ENCODE measurements at regions of chr18 and their contacts with region 1.

Region 1: GRCh38 chr18:63518178-63519012 is 23.8 kb upstream of the SERPINB12 start:
- DNase-seq: peak in 8 of 9 donors; percentile 13 to 62 (median 52)
- ATAC-seq: peak; percentile 76
- H3K4me3 ChIP-seq: no peak overlapping the region
- H3K4me3 Mint-ChIP-seq: no peak overlapping the region
- H3K27ac ChIP-seq: no peak overlapping the region
- H3K27ac Mint-ChIP-seq: no peak overlapping the region
- H3K4me1 ChIP-seq: no peaks in the 10 kb centered on the region
- H3K4me1 Mint-ChIP-seq: peaks cover 0 to 7% (median 0%) of the 10 kb centered on the region in 7 donors
- H3K27me3 ChIP-seq: no peaks in the 10 kb centered on the region
- H3K27me3 Mint-ChIP-seq: peaks cover 14 to 37% (median 21%) of the 10 kb centered on the region in 5 donors

Region 2: DNA sequence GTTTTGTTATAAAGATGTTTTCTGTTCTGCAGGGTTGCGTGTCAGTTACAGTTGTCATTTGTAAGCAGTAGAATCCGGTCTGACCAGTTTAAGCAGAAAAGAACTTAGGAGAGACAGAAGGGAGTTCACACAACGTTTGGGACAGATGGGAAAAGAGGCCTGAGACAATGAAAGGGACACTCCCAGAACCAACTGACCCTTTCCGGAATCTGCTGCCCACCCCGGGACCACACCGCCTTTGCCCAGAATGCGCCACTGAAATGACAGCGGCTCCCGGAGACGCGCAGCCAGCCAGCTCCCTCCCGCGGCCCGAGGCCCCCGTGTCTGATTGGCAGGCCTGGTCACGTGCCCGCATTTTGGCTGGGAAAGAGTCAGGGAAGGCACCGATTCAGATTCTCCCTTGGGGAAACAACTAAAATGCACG is 443.4 kb before region 1 on chr18:
- CTCF ChIA-PET with region 1: no interaction called
- POLR2A ChIA-PET with region 1: no interaction called
- intact Hi-C with region 1: no loop called
- DNase-seq: peak; percentile 19 to 68 (median 42)
- ATAC-seq: peak; percentile 80
- H3K4me3 ChIP-seq: peak overlapping the region; percentile 66
- H3K4me3 Mint-ChIP-seq: peak overlapping the region; percentile 70 to 95 (median 86)
- H3K27ac ChIP-seq: no peak overlapping the region
- H3K27ac Mint-ChIP-seq: peak overlapping the region in 8 of 9 donors; percentile 0 to 85 (median 65)
- H3K4me1 ChIP-seq: no peaks in the 10 kb centered on the region
- H3K4me1 Mint-ChIP-seq: peaks cover 0 to 13% (median 12%) of the 10 kb centered on the region in 7 donors
- H3K27me3 ChIP-seq: no peaks in the 10 kb centered on the region
- H3K27me3 Mint-ChIP-seq: peaks cover 0 to 23% (median 10%) of the 10 kb centered on the region in 5 donors

Region 3: DNA sequence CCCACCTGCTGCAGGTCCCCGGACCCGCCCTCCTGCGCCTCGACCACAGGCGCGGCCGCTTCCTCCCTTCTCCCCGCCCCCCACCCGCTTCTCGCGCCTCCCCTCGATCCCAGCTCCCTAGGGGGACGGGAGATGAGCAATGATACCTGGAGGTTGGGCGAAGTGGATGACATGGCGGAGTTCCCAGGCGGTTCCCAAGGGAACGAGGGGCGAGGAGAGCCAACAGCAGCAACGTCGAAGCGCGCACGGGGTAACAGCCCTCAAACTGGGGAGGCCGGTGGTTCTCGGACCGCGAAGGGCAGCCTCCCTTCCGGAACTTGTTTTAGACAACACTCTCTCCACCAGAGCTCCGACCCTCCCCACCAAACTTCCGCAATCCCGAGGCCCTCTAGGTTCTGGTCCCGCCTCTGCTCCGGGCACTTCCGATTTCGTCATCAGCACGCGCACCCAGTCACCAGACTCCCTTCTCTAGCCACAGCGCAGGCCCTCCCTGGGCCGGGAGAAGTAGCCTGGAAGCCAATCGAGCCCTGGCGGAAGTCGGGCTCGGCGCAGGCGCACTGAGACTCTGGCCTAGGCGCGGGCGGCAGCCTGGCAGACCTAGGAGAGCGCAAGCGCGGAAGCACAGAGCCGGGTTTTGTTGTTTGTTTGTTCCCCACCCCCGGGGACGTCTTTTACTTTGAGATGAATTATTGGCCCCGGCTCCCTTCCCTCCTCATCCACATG is 96.1 kb before region 1 on chr18 and contains the start of gene VPS4B:
- CTCF ChIA-PET with region 1: no interaction called
- POLR2A ChIA-PET with region 1: no interaction called
- intact Hi-C with region 1: no loop called
- DNase-seq: peak; percentile 99 to 100 (median 99)
- ATAC-seq: peak; percentile 97
- H3K4me3 ChIP-seq: peak within 1 kb of the TSS; percentile 96
- H3K4me3 Mint-ChIP-seq: peak within 1 kb of the TSS; percentile 88 to 100 (median 97)
- H3K27ac ChIP-seq: peak within 1 kb of the TSS; percentile 95
- H3K27ac Mint-ChIP-seq: peak within 1 kb of the TSS; percentile 94 to 100 (median 98)
- H3K4me1 ChIP-seq: peaks cover 17 to 22% of the 10 kb centered on the region in 2 donors
- H3K4me1 Mint-ChIP-seq: peaks cover 6 to 34% (median 26%) of the 10 kb centered on the region in 7 donors
- H3K27me3 ChIP-seq: no peaks in the 10 kb centered on the region
- H3K27me3 Mint-ChIP-seq: peaks cover 0 to 5% (median 2%) of the 10 kb centered on the region in 5 donors
- total RNA-seq, gene VPS4B: 48.2 to 84.6 (median 74.9) TPM

Region 4: DNA sequence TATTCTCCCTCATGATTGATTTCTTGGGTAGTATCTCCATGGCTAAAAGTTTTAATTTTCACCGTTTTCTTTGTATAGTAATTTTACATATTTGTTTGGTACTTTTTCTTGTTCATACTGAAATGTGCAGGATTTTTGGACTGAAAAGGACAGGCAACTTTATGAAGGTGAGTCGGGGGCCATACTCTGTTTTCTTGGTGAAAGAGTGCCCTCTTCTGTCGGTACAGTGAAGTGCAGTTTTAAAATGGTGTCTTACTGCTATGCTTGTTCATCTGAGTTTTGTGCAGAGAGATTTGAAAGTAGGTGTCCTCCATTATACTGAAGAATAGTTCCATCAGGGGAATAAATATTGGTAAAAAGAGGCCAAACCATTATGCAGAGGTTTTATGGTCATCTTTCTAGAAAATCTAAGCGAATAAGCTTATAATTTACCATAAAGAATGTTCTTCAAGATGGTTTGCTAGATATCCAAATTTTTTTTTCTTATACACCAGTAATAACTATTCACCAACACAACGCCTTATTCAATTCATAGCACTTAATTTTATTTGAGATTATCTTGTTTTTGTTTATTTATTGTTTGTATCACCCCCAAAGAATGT is 60.1 kb after region 1 on chr18:
- CTCF ChIA-PET with region 1: no interaction called
- POLR2A ChIA-PET with region 1: no interaction called
- intact Hi-C with region 1: loop called in 1 of 2 experiments (anchors 1 kb)
- DNase-seq: no peak
- ATAC-seq: no peak
- H3K4me3 ChIP-seq: no peak overlapping the region
- H3K4me3 Mint-ChIP-seq: no peak overlapping the region
- H3K27ac ChIP-seq: no peak overlapping the region
- H3K27ac Mint-ChIP-seq: no peak overlapping the region
- H3K4me1 ChIP-seq: no peaks in the 10 kb centered on the region
- H3K4me1 Mint-ChIP-seq: peaks cover 0 to 2% (median 0%) of the 10 kb centered on the region in 7 donors
- H3K27me3 ChIP-seq: no peaks in the 10 kb centered on the region
- H3K27me3 Mint-ChIP-seq: peaks cover 7 to 33% (median 13%) of the 10 kb centered on the region in 5 donors

Region 5: DNA sequence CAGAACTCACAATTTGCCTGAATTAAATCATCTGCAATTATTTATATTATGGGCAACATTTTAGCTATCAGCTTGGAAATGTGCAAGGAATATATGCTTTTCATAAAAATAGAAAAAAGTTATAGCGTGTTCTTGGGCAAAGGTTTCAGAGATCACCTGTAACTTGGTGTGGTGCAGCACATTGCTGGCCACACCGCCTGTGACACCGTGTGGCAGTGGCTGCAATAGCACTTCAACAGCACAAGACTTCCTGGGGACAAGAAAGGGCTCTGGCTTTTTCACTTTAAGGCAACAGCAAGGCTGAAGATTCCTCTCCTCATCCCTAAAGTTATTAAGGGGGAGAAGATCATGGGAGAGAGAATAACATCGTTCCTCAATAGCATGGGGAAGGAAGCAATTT is 158.1 kb after region 1 on chr18:
- CTCF ChIA-PET with region 1: no interaction called
- POLR2A ChIA-PET with region 1: no interaction called
- intact Hi-C with region 1: loop called in 1 of 2 experiments (anchors 5 kb)
- DNase-seq: no peak
- ATAC-seq: no peak
- H3K4me3 ChIP-seq: no peak overlapping the region
- H3K4me3 Mint-ChIP-seq: no peak overlapping the region
- H3K27ac ChIP-seq: no peak overlapping the region
- H3K27ac Mint-ChIP-seq: no peak overlapping the region
- H3K4me1 ChIP-seq: no peaks in the 10 kb centered on the region
- H3K4me1 Mint-ChIP-seq: peaks cover 0 to 2% (median 0%) of the 10 kb centered on the region in 7 donors
- H3K27me3 ChIP-seq: no peaks in the 10 kb centered on the region
- H3K27me3 Mint-ChIP-seq: peaks cover 0 to 2% (median 0%) of the 10 kb centered on the region in 5 donors

Region 6: DNA sequence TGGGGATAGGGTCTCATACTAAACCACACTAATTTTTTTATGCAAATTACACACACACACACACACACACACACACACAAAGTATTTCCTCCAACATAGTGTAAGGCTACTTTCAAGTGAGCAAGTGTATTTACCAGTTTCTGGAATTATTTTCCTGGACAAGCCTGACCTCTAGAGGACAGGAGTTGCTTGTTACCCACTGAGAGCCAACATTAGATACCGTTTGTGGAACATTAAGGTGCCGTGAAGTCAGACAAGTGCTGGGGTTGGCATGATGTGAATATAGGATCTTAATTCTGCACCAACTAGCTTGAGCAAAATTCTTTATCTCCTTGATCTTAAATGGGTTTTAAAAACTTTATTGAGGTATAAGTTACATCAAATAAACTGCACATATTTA is 329.8 kb after region 1 on chr18:
- CTCF ChIA-PET with region 1: interaction called, 3 read pairs
- POLR2A ChIA-PET with region 1: no interaction called
- intact Hi-C with region 1: loop called (anchors 2 kb)
- DNase-seq: no peak
- ATAC-seq: peak; percentile 60
- H3K4me3 ChIP-seq: no peak overlapping the region
- H3K4me3 Mint-ChIP-seq: no peak overlapping the region
- H3K27ac ChIP-seq: no peak overlapping the region
- H3K27ac Mint-ChIP-seq: no peak overlapping the region
- H3K4me1 ChIP-seq: no peaks in the 10 kb centered on the region
- H3K4me1 Mint-ChIP-seq: peaks cover 0 to 1% (median 0%) of the 10 kb centered on the region in 7 donors
- H3K27me3 ChIP-seq: no peaks in the 10 kb centered on the region
- H3K27me3 Mint-ChIP-seq: peaks cover 0 to 30% (median 5%) of the 10 kb centered on the region in 5 donors

Region 7: GRCh38 chr18:63936156-63936931 is 417.9 kb after region 1 on chr18:
- CTCF ChIA-PET with region 1: interaction called, 8 read pairs
- POLR2A ChIA-PET with region 1: no interaction called
- intact Hi-C with region 1: loop called (anchors 1 kb)
- DNase-seq: peak in 8 of 9 donors; percentile 6 to 69 (median 19)
- ATAC-seq: peak; percentile 93
- H3K4me3 ChIP-seq: peak overlapping the region; percentile 58
- H3K4me3 Mint-ChIP-seq: peak overlapping the region in 8 of 10 donors; percentile 39 to 86 (median 64)
- H3K27ac ChIP-seq: no peak overlapping the region
- H3K27ac Mint-ChIP-seq: peak overlapping the region in 1 of 9 donors; percentile 54
- H3K4me1 ChIP-seq: peaks cover 0 to 5% of the 10 kb centered on the region in 2 donors
- H3K4me1 Mint-ChIP-seq: peaks cover 0 to 4% (median 3%) of the 10 kb centered on the region in 7 donors
- H3K27me3 ChIP-seq: peaks cover 0 to 8% of the 10 kb centered on the region in 2 donors
- H3K27me3 Mint-ChIP-seq: peaks cover 7 to 38% (median 24%) of the 10 kb centered on the region in 5 donors

Region 8: GRCh38 chr18:63979409-63979920 is 461.1 kb after region 1 on chr18:
- CTCF ChIA-PET with region 1: interaction called, 7 read pairs
- POLR2A ChIA-PET with region 1: no interaction called
- intact Hi-C with region 1: loop called (anchors 1 kb)
- DNase-seq: peak in 6 of 9 donors; percentile 20 to 52 (median 34)
- ATAC-seq: peak; percentile 78
- H3K4me3 ChIP-seq: no peak overlapping the region
- H3K4me3 Mint-ChIP-seq: peak overlapping the region in 1 of 10 donors; percentile 18
- H3K27ac ChIP-seq: no peak overlapping the region
- H3K27ac Mint-ChIP-seq: peak overlapping the region in 2 of 9 donors; percentile 58 to 79
- H3K4me1 ChIP-seq: peaks cover 0 to 8% of the 10 kb centered on the region in 2 donors
- H3K4me1 Mint-ChIP-seq: peaks cover 6 to 22% (median 10%) of the 10 kb centered on the region in 7 donors
- H3K27me3 ChIP-seq: no peaks in the 10 kb centered on the region
- H3K27me3 Mint-ChIP-seq: peaks cover 0 to 3% (median 0%) of the 10 kb centered on the region in 5 donors

Region 9: GRCh38 chr18:63994783-63995399 is 476.5 kb after region 1 on chr18:
- CTCF ChIA-PET with region 1: no interaction called
- POLR2A ChIA-PET with region 1: no interaction called
- intact Hi-C with region 1: loop called (anchors 1 to 2 kb)
- DNase-seq: peak in 3 of 9 donors; percentile 25 to 39 (median 34)
- ATAC-seq: peak; percentile 52
- H3K4me3 ChIP-seq: no peak overlapping the region
- H3K4me3 Mint-ChIP-seq: no peak overlapping the region
- H3K27ac ChIP-seq: no peak overlapping the region
- H3K27ac Mint-ChIP-seq: peak overlapping the region in 1 of 9 donors; percentile 30
- H3K4me1 ChIP-seq: no peaks in the 10 kb centered on the region
- H3K4me1 Mint-ChIP-seq: peaks cover 0 to 9% (median 4%) of the 10 kb centered on the region in 7 donors
- H3K27me3 ChIP-seq: no peaks in the 10 kb centered on the region
- H3K27me3 Mint-ChIP-seq: no peaks in the 10 kb centered on the region

Measured in naive thymus-derived CD4-positive, alpha-beta T cell (primary cell).